ENCODE measurements at regions of chr1 and their contacts with region 1.

Region 1: GRCh38 chr1:229848752-229849677 is 218.0 kb upstream of the GALNT2 start:
- DNase-seq: no peak
- ATAC-seq: peak; percentile 69
- H3K4me3 Mint-ChIP-seq: no peak overlapping the region
- H3K27ac Mint-ChIP-seq: no peak overlapping the region
- H3K4me1 Mint-ChIP-seq: no peaks in the 10 kb centered on the region
- H3K27me3 Mint-ChIP-seq: no peaks in the 10 kb centered on the region
- CTCF ChIP-seq: peak; percentile 36; the same call in 1 of the 2 replicates

Region 2: DNA sequence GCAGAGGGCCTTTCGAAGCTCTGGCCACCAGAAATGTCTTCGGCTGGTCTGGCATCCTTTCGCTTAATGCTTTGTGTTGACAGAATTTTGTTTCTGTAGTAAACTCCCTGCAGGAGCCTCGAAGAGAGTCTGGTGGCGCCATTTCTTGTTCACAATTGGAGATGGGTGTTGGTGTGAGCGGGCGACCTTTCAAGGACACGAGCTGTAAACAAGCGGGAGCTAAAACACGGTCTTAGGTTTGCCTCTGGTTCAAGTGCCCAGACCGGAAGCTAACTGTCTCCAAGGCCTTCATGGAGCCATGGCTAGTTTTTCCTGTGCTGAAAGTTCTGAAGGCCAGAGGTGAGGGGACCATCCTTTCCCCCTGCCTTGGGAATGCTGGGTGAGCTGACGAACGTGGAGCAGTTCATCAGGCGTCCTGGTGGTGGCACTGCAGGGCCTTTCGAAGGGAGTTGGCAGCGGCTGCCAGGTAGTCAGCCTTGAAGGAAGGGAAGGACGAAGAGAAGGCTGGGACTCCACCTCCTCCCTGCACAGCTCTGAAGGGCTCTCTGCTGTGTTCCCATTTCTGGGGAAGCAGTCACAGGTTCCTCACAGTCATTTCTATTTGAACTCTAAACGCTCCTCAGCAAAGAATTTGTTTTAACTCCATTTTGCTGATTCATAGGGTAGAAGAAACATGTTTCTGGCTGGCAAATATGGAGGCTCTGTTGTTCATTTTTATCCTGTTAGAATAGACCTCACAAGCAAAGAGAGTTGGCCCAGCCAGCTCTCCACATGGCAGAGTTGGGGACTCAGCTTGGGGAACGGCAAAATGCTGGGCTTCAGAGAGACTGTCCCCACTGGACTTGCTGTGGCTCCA is 187.8 kb before region 1 on chr1:
- CTCF ChIA-PET with region 1: interaction called, 24 read pairs
- POLR2A ChIA-PET with region 1: no interaction called
- DNase-seq: peak; percentile 91
- ATAC-seq: peak; percentile 99
- H3K4me3 Mint-ChIP-seq: no peak overlapping the region
- H3K27ac Mint-ChIP-seq: peak overlapping the region; percentile 86
- H3K4me1 Mint-ChIP-seq: peaks cover 8% of the 10 kb centered on the region
- H3K27me3 Mint-ChIP-seq: no peaks in the 10 kb centered on the region
- CTCF ChIP-seq: peak; percentile 80

Region 3: DNA sequence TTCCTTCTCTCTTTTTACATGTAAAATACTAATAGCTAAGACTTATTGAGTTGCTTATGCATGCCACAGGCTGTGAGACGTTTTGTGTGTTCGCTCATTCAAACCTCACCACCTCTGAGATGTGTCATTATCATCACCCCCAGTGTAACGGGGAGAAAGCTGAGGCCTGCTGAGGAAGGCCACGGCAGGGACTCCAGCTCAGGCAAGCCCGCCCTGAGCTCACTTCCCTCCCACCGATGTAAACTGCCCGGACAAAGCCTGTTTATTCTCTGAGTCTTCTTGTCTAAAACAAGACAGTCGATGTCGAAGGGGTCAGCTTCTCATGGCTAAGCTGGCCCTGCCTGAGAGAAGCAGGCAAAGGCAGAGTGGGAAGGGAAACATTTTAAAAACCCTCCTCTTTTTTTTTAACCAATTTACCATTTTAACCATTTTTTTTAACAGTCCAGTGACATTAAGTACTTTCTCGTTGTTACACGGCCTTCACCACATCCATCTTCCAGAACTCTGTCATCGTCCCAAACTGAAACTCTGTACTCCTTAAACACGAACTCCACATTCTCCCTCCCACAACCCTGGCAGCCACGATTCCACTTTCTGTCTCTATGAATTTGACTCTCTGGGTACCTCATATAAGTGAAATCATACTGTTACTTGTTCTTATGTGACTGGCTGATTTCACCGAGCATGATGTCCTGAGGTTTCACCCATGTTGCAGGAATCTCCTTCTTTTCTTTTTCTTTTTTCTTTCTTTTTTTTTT is 13.2 kb after region 1 on chr1:
- CTCF ChIA-PET with region 1: interaction called, 19 read pairs
- POLR2A ChIA-PET with region 1: no interaction called
- DNase-seq: no peak
- ATAC-seq: peak; percentile 74
- H3K4me3 Mint-ChIP-seq: no peak overlapping the region
- H3K27ac Mint-ChIP-seq: peak overlapping the region; percentile 47
- H3K4me1 Mint-ChIP-seq: peaks cover 14% of the 10 kb centered on the region
- H3K27me3 Mint-ChIP-seq: no peaks in the 10 kb centered on the region
- CTCF ChIP-seq: no peak

Region 4: DNA sequence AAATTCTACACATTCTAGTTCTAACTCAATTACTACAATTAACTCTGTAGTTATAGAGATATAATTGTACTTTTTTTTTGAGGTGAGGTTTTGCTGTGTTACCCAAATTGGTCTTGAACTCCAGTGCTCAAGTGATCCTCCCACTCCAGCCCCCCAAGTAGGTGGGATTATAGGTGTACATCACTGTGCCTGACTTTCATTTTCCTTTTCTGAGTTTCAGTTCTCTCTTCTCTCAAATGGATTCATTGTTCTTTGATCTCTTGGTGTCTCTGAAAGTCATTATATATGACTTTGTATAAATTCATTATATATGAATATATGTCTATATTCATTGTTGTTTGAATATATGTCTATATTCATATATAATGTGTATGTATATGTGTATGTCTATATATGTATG is 144.0 kb after region 1 on chr1:
- CTCF ChIA-PET with region 1: no interaction called
- POLR2A ChIA-PET with region 1: no interaction called
- DNase-seq: no peak
- ATAC-seq: no peak
- H3K4me3 Mint-ChIP-seq: no peak overlapping the region
- H3K27ac Mint-ChIP-seq: no peak overlapping the region
- H3K4me1 Mint-ChIP-seq: no peaks in the 10 kb centered on the region
- H3K27me3 Mint-ChIP-seq: no peaks in the 10 kb centered on the region
- CTCF ChIP-seq: no peak

Region 5: DNA sequence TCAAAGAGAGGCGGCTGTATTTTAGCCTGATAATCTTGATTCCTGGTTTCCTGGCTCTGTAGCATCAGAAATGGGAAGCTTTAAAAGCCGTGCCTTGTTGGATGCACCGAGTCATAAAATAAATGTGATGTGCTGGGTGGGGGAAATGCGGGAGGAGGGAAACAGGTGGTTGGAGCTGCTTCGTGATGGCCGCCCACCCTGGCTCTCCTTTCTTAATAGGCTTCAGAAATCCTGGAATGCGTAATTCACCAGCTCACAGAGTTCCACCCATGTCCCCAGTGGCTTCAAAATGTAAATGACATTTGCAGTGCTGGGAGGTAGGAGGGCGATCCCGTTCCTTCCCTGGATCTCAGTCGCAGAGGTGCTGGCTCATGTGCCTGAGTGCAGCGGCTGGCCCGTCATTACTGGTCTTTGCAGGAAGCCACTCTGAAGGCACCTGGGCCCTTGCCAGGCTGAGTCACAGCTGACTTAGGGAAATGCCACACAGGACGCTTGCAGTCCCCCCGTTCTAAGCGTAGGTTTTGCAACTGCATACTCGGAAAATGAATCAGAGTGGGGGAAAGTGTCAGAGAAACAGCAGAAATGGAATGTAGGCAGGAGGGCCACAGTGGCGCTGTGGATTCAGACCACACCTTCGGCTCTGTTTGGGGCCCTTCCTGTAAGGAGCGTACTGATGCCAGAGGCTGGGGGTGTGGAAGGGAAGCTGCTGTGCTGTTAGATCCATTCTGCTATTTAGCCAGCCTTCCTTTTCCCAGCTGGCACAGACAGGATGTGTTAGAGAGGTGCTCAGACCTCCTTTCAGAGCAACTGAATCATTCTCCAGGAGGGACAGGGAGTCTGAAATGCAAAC is 255.6 kb after region 1 on chr1:
- CTCF ChIA-PET with region 1: no interaction called
- POLR2A ChIA-PET with region 1: no interaction called
- DNase-seq: no peak
- ATAC-seq: peak; percentile 60
- H3K4me3 Mint-ChIP-seq: no peak overlapping the region
- H3K27ac Mint-ChIP-seq: peak overlapping the region; percentile 84
- H3K4me1 Mint-ChIP-seq: peaks cover 66% of the 10 kb centered on the region
- H3K27me3 Mint-ChIP-seq: no peaks in the 10 kb centered on the region
- CTCF ChIP-seq: no peak

Measured in WTC11 (cell line).